OCI-LY7 (cell line): ENCODE measurements at regions of chr11 and their contacts with region 1.

Region 1: DNA sequence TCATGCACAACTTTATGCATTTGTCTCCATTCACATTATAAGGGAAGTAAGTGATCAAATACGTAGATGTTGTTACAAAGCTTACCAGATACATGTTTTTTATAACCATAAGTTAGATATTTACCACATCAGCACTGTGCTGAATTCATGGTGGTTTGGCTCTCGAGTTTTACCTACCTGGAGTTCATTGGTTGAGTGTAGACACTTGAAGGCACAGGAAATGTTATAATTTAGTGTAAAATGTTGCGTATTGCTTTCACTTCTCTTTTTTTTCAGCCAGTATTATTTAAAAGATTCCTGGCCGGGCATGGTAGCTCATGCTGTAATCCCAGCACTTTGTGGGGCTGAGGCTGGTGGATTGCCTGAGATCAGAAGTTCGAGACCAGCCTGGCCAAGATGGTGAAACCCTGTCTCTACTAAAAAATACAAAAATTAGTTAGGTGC is 53.1 kb upstream of the GRK2 start:
- DNase-seq: peak; percentile 86
- H3K4me3 ChIP-seq: peak overlapping the region; percentile 8
- H3K27ac ChIP-seq: peak overlapping the region; percentile 81
- H3K4me1 ChIP-seq: peaks cover 24% of the 10 kb centered on the region
- CTCF ChIP-seq: no peak

Region 2: DNA sequence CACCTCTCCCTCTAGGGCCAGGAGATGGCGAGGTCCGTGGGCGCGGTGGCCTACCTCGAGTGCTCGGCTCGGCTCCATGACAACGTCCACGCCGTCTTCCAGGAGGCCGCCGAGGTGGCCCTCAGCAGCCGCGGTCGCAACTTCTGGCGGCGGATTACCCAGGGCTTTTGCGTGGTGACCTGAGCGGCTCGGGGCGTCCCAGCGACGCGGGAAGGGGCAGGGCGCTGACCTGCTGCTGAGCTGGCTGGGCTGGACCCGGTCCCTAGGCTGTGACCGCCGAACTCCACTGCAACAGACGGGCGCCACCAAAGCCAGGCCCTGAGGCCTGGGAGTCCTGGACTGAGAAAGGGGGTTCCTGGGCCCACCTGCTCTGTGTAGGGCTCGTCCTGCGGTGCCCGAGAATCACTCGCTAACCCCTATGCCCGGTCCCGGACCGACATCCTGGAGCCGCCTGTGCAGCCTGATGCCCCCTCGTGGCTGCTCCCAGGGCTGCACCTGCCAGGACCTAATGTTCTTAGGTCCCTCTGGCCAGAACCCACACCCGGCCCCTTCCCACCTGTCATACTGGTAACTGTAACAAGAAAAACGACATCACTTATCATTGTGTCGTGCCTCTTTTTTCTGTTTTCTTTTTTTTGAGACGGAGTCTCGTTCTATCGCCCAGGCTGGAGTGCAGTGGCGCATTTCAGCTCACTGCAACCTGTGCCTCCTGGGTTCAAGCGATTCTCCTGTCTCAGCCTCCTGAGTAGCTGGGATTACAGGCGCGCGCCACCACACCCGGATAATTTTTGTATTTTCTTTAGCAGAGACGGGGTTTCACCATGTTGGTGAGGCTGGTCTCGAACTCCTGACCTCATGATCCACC is 141.5 kb before region 1 on chr11:
- CTCF ChIA-PET with region 1: no interaction called
- POLR2A ChIA-PET with region 1: no interaction called
- intact Hi-C with region 1: no loop called
- DNase-seq: peak; percentile 71
- H3K4me3 ChIP-seq: no peak overlapping the region
- H3K27ac ChIP-seq: no peak overlapping the region
- H3K4me1 ChIP-seq: no peaks in the 10 kb centered on the region
- CTCF ChIP-seq: peak; percentile 80

Region 3: GRCh38 chr11:67118801-67119584 is 94.2 kb before region 1 on chr11 and contains the start of gene KDM2A:
- CTCF ChIA-PET with region 1: no interaction called
- POLR2A ChIA-PET with region 1: no interaction called
- intact Hi-C with region 1: no loop called
- DNase-seq: peak; percentile 99
- H3K4me3 ChIP-seq: peak within 1 kb of the TSS; percentile 87
- H3K27ac ChIP-seq: peak within 1 kb of the TSS; percentile 91
- H3K4me1 ChIP-seq: peaks cover 29% of the 10 kb centered on the region
- CTCF ChIP-seq: no peak
- total RNA-seq, gene KDM2A: 25.4 and 31.7 TPM in 2 replicates

Region 4: DNA sequence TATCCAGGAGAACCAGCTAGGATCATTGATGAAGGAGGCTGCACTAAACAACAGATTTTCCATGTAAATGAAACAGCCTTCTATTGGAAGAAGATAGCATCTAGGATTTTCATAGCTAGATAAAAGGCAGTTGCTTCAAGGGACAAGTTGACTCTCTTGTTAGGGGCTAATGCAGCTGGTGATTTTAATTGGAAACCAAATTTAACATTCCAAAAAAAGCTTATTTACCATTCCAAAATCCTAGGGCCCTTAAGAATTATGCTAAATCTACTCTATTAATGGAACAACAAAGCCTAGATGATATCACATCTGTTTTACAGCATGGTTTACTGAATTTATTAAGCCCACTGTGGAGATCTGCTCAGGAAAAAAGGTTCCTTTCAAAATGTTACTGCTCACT is 13.4 kb before region 1 on chr11:
- CTCF ChIA-PET with region 1: no interaction called
- POLR2A ChIA-PET with region 1: interaction called, 10 read pairs
- intact Hi-C with region 1: no loop called
- DNase-seq: no peak
- H3K4me3 ChIP-seq: no peak overlapping the region
- H3K27ac ChIP-seq: no peak overlapping the region
- H3K4me1 ChIP-seq: no peaks in the 10 kb centered on the region
- CTCF ChIP-seq: no peak

Region 5: GRCh38 chr11:67428052-67428914 is 215.1 kb after region 1 on chr11 and contains the start of gene RPS6KB2:
- CTCF ChIA-PET with region 1: no interaction called
- POLR2A ChIA-PET with region 1: no interaction called
- intact Hi-C with region 1: no loop called
- DNase-seq: peak; percentile 99
- H3K4me3 ChIP-seq: peak within 1 kb of the TSS; percentile 82
- H3K27ac ChIP-seq: peak within 1 kb of the TSS; percentile 46
- H3K4me1 ChIP-seq: peaks cover 26% of the 10 kb centered on the region
- CTCF ChIP-seq: no peak
- total RNA-seq, gene RPS6KB2: 51.1 and 69.4 TPM in 2 replicates

Region 6: GRCh38 chr11:67482825-67483798 is 269.9 kb after region 1 on chr11 and contains the start of gene AIP:
- CTCF ChIA-PET with region 1: no interaction called
- POLR2A ChIA-PET with region 1: no interaction called
- intact Hi-C with region 1: no loop called
- DNase-seq: peak; percentile 99
- H3K4me3 ChIP-seq: peak within 1 kb of the TSS; percentile 71
- H3K27ac ChIP-seq: peak within 1 kb of the TSS; percentile 87
- H3K4me1 ChIP-seq: peaks cover 44% of the 10 kb centered on the region
- CTCF ChIP-seq: no peak
- total RNA-seq, gene AIP: 123 and 125 TPM in 2 replicates